Left ventricle myocardium inferior (tissue), 1 donor: ENCODE measurements at regions of chr9 and their contacts with region 1.

Region 1: GRCh38 chr9:7957803-7958202 is 158.2 kb upstream of the DMAC1 start:
- DNase-seq: no peak
- H3K4me3 ChIP-seq: no peak overlapping the region
- H3K27ac ChIP-seq: no peak overlapping the region
- H3K4me1 ChIP-seq: peaks cover 2% of the 10 kb centered on the region
- H3K27me3 ChIP-seq: no peaks in the 10 kb centered on the region
- CTCF ChIP-seq: no peak

Region 2: DNA sequence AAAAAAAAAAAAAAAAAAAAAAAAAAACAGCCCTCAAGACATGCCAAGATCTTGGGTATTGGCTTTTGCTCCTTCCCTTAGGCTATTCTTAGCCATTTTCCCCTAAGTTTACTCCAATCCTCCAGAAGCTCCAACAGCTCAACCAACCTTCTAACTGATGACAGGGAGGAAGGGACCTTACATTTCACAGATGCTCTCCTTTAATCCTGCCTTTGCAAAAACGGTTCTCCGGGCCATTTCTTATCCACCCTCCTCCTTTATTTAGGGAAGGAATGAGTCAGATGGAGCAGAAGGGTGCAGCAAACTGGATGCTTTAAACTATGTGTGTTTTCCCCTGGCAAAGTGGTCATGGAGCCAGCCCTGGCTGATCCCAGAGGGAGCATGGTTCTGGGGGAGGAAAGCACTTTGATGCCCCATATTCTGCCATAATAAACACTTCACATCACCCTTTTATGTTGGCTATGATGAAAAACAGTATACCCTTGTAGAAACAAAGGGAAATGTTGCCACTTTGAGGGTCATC is 211.2 kb after region 1 on chr9:
- intact Hi-C with region 1: no loop called
- DNase-seq: no peak
- H3K4me3 ChIP-seq: no peak overlapping the region
- H3K27ac ChIP-seq: no peak overlapping the region
- H3K4me1 ChIP-seq: no peaks in the 10 kb centered on the region
- H3K27me3 ChIP-seq: no peaks in the 10 kb centered on the region
- CTCF ChIP-seq: no peak

Region 3: GRCh38 chr9:8816361-8816760 is 858.6 kb after region 1 on chr9:
- intact Hi-C with region 1: loop called (anchors 10 kb)
- DNase-seq: no peak
- H3K4me3 ChIP-seq: no peak overlapping the region
- H3K27ac ChIP-seq: no peak overlapping the region
- H3K4me1 ChIP-seq: no peaks in the 10 kb centered on the region
- H3K27me3 ChIP-seq: no peaks in the 10 kb centered on the region
- CTCF ChIP-seq: no peak